KBM-7 (cell line): ENCODE measurements at regions of chr14 and their contacts with region 1.

Region 1: DNA sequence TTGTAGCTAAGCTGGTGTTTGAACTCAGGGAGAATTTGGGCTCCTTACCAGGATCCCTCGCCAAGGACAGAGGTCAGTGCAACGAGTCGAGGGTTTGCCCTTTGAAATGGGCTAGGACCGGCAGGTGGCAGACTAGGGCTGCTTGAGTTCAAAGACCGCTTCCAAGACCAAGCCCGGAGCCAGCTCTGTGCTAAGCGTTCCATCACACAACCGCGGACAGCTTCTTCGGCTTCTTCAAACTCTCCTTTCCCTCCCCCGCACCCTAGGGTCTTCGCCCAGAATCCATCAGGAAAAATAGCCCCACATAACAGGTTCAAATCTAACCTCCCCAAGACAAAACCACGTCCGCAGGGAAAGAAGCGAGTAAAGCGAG is 705 bp upstream of the FLVCR2 start:
- DNase-seq: peak; percentile 86

Region 2: DNA sequence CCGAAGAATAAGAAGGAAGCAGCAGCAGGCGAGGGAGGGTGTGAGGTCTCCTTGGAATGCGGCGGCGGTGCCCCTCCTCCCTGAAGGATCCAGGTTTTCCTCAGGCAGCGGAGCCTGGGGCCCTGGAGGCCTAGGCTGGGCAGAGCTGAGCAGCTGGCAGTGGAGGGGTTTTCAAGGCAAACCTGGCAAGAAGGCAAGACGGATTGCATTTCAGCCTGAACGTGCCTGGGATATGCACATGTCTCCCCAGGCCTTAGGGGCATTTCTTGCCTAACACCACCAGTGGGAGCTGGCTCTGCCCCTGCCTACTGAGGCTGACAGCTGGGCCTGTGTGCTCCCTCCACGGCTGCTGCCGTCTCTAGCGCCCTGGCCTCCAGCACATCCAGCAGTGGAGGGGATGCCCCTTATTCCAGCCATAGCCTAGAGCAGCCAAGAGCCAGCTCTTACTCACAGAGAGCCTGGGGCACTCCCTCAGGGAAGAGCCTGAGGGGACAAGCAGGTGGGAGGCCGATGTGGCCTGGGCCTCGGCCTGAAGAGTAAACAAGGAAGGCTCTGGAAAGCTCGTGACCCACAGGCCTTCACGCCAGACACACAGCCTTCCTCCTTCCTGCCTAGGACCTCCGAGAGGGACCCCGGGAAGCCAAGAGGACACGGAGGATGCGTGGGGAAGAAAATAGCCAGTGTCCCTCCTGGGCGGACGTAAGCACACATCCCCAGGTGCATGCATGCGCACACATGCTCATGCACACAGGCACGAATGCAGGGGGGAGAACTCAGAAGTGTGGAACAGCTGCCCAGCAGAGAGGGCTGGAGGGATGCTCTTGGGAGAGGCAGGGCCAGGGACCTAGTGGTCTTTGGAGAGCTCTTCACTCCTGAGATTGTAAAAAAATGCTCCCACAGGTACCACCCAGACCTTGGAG is 598.0 kb before region 1 on chr14:
- in situ Hi-C with region 1: no loop called
- DNase-seq: no peak

Region 3: DNA sequence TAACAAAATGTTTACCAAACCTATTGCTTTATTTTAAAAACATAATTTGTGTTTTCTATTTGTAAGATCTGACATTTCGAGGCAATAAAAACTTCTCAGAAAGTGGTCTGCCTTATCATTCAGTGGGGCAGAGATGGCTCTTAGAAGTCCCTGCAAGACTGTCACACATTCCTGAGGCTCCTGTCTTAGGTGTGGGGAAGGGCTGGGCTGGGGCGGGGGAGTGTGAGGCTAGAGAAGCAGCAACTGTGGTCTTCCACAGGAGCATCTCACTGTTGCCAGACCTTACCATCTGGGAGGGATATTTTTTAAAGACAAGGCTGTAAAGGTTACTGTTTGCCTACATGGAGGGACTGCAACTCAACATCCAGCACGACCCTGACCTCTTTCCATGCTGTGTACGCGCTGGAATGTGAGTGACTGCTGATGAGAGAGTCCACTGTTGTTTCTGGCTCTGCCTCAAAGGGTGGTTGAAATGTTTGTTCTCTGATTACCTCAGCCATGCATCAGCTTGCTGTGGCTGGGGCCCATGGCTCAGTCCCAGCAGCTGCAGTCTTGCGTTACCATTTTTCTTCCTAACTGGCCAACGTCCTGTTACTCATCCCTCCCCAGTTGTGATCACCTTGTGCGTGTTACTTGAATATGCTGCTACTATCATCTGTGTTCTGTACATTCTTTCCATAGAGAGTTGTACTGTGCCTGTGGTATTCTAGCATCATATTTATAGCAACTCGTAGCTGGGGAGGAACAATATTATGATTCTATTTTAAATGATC is 70.5 kb after region 1 on chr14:
- in situ Hi-C with region 1: loop called (anchors 10 kb)
- DNase-seq: no peak